ENCODE measurements at regions of chrX and their contacts with region 1.

Region 1: DNA sequence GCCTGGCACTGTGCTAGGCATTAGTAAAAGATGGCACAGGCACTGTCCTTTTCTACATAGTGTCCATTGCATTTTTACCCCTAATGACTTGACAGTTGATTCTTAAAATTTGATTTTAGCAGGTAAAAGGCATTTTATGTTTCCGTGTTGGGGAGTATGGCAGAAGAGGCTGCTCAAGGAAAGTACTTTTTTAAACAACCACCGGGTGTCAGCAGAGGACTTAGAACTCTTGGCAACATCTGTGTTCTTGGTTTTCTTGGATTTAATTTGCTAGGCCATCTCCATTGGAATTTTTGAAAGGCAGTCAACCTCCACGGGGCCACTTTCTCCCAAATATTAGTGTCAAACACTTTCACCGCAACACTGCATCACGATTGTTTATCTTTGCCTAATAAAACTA is 102.9 kb downstream of the TSPAN7 start:
- DNase-seq: peak; percentile 26
- ATAC-seq: peak; percentile 74
- H3K4me3 ChIP-seq: no peak overlapping the region
- H3K27ac ChIP-seq: no peak overlapping the region
- H3K4me1 ChIP-seq: no peaks in the 10 kb centered on the region
- H3K27me3 ChIP-seq: no peaks in the 10 kb centered on the region
- CTCF ChIP-seq: peak in 2 of 3 experiments; percentile 23 to 40; a peak in 3 of 6 replicates
- POLR2A ChIP-seq: no peak
- RAD21 ChIP-seq: peak; percentile 58

Region 2: DNA sequence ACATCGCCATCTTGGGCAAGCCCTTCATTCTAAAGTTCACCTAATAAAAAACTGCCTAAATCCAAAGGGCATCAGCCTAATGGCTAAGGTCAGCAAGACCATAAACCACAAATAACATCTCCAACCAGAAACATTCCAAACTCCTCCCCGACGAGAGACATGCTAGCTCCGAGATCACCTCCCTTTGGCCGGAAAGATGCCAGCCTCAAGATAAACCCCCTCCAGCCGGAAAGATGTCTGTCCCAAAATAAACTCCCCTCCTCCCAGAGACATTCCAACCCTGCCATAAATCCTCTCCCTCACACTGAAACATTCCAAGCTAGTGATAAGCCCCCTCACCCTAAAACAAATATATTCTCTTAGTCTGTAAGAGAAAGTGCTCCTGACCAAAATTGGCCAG is 803.6 kb before region 1 on chrX:
- CTCF ChIA-PET with region 1: no interaction called
- POLR2A ChIA-PET with region 1: no interaction called
- RAD21 ChIA-PET with region 1: no interaction called
- intact Hi-C with region 1: no loop called
- DNase-seq: no peak
- ATAC-seq: no peak
- H3K4me3 ChIP-seq: no peak overlapping the region
- H3K27ac ChIP-seq: no peak overlapping the region
- H3K4me1 ChIP-seq: no peaks in the 10 kb centered on the region
- H3K27me3 ChIP-seq: no peaks in the 10 kb centered on the region
- CTCF ChIP-seq: no peak
- POLR2A ChIP-seq: no peak
- RAD21 ChIP-seq: no peak

Region 3: DNA sequence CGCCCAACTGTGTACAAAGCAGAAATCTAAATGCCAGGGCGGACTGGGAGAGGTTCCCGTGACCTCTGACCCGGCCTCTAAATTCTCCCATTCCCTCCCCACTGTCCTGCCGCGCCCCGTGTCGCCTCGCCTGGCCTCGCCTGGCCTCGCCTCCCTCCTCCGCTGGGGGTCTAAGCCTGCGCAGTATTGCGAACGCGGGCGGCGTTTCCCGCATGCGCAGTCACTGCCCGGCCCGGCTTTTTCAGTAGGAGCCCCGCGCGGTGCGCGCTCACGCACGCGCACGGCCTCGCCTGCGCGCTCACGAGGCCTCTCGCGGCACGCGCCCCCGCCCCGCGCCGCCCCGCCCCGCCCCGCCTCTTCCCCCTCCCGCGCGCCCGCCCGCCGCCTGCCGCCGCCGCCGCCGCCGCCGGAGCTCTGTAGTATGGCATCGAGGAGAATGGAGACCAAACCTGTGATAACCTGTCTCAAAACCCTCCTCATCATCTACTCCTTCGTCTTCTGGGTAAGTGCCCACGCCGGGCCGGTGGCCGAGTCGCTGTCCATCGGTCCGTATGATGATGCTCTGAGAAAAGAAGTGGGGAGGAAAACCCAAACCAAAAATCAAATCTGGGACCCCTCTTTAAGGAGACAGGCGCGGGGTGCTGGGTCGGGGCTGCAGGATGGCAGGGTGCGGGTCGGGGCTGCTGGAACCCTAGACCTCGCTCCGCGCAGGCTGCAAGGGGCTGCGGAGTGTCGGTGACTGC is 103.0 kb before region 1 on chrX and contains the start of gene TSPAN7:
- CTCF ChIA-PET with region 1: no interaction called
- POLR2A ChIA-PET with region 1: no interaction called
- RAD21 ChIA-PET with region 1: no interaction called
- intact Hi-C with region 1: no loop called
- DNase-seq: peak; percentile 28
- ATAC-seq: peak; percentile 96
- H3K4me3 ChIP-seq: peak within 1 kb of the TSS; percentile 37 to 52
- H3K27ac ChIP-seq: no peak within 1 kb of the TSS
- H3K4me1 ChIP-seq: peaks cover 3 to 5% of the 10 kb centered on the region in 2 experiments; a peak in 2 of 4 replicates
- H3K27me3 ChIP-seq: no peaks in the 10 kb centered on the region
- CTCF ChIP-seq: no peak
- POLR2A ChIP-seq: no peak
- RAD21 ChIP-seq: no peak
- total RNA-seq, gene TSPAN7: 2.9 TPM

Region 4: DNA sequence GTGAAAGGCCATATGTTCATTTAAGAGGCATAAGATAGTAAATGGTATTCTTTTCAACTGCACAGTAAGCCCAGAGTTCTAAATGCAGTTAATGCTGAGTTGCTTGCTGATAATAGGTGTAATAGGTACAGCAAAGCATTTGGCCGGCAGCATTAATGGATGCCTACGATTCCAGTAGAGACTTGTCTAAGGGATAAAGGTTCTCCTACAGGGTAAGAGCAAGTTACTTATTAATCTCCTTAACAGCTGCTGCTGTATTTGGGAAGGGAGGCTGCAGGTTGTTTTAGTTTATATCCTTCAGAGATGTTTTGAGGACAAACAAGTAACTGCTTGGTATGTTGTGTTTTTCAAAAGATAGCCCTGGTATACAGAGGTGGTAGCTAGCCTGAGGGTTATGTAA is 86.1 kb before region 1 on chrX:
- CTCF ChIA-PET with region 1: no interaction called
- POLR2A ChIA-PET with region 1: no interaction called
- RAD21 ChIA-PET with region 1: no interaction called
- intact Hi-C with region 1: no loop called
- DNase-seq: no peak
- ATAC-seq: no peak
- H3K4me3 ChIP-seq: no peak overlapping the region
- H3K27ac ChIP-seq: no peak overlapping the region
- H3K4me1 ChIP-seq: no peaks in the 10 kb centered on the region
- H3K27me3 ChIP-seq: no peaks in the 10 kb centered on the region
- CTCF ChIP-seq: no peak
- POLR2A ChIP-seq: no peak
- RAD21 ChIP-seq: no peak

Region 5: DNA sequence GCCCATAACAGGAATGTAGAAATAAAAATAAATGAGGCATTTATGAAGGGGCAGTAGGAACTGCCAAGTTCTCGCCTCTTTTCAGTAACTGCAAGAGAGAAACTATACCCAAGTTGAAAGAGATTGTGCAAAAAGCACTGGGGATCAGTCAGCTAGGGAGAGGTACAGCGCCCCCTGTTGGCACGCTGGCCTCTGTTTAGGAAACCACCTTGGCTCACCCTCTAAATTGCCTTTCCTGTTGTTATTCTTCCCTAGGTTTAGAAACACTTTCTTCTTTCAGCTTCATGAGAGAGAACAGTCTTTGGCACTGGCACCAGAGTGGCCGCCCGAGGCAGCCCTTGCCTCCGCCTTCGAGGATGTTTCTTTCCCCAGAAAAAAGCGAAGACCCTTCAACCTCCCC is 485.5 kb after region 1 on chrX:
- CTCF ChIA-PET with region 1: no interaction called
- POLR2A ChIA-PET with region 1: no interaction called
- RAD21 ChIA-PET with region 1: no interaction called
- intact Hi-C with region 1: loop called (anchors 5 kb)
- DNase-seq: no peak
- ATAC-seq: peak; percentile 57; the same call in 1 of the 2 replicates
- H3K4me3 ChIP-seq: no peak overlapping the region
- H3K27ac ChIP-seq: no peak overlapping the region
- H3K4me1 ChIP-seq: no peaks in the 10 kb centered on the region
- H3K27me3 ChIP-seq: no peaks in the 10 kb centered on the region
- CTCF ChIP-seq: peak; percentile 26 to 71 (median 67); a peak in 5 of 6 replicates
- POLR2A ChIP-seq: no peak
- RAD21 ChIP-seq: peak; percentile 54

Measured in HCT116 (cell line).